Left cardiac atrium (tissue), 4 donors: ENCODE measurements at regions of chr22 and their contacts with region 1.

Region 1: DNA sequence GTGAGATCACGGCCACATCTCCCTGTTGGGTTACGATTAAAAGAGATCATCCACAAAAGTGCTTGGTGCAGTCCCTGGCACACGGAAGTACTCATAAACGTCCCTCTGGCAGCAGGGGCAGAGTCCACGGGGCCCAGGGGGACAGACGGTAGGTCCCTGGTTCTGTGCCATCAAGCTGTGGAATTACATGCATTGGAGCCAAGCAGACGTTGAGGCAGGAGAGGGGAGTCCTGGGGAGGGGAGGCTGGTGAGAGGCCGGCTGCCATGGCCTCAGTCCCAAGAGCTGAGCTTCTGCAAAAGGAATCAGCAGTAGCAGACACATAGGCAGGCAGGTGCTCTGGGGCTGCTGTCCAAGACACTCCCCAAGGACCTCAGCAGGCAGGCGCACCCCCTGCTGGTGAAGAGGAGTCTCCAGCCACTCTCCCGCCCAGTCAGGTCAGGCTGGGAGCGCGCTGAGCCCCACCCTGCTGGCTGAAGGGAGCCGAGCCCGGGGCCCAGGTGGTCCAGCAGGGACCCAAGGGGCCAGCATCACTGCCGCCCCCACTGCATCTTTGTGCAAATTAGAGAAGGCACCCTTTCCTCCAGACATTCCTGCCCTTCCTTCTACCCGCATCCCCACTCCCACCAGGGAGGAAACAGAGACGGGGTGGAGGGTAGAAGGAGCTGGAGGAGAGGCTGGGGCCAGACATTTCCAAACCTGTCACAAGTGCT is 7.6 kb upstream of the KCTD17 start:
- DNase-seq: peak; percentile 58
- ATAC-seq: peak; percentile 85 to 93

Region 2: GRCh38 chr22:36781656-36782627 is 262.0 kb before region 1 on chr22:
- intact Hi-C with region 1: loop called in 1 of 2 experiments (anchors 10 kb)
- DNase-seq: peak; percentile 82
- ATAC-seq: peak; percentile 91 to 94

Region 3: GRCh38 chr22:36873680-36874537 is 170.1 kb before region 1 on chr22:
- intact Hi-C with region 1: loop called in 1 of 2 experiments (anchors 2 kb)
- DNase-seq: peak; percentile 39
- ATAC-seq: peak; percentile 84 to 87